Tibial artery (tissue), 4 donors: ENCODE measurements at regions of chr3 and their contacts with region 1.

Region 1: DNA sequence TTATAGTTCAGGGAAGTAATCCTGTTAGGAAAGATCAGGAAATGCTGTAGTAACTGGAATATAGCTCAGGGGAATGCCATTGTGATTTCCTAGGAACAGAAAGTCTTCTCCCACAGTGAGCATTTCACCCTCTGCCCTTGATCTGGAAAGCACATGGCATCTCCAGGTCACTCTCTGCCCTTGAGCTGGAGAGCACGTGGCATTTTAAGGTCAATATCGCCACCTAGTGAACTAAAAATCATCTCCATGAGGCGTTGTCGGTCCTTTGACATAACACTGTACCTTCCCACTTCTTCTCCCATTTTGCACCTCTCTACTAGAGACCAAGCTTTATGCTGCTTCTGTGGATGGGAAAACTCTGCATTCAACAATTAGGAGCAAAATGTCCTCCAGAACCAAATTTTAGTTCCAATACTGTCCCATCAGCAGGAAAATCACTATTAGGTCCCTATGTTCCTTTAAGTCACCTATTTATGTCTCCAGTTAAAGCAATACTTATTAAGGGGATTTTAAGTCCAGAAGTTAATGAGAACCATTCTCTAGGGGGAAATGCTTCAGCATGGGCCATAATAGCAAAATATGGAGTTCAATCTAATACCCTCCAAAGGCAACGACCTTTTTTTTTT is 54.7 kb upstream of the GK5 start:
- DNase-seq: peak in 1 of 2 donors; percentile 51
- H3K4me3 ChIP-seq: no peak overlapping the region
- H3K27ac ChIP-seq: no peak overlapping the region
- H3K4me1 ChIP-seq: peaks cover 0 to 16% (median 3%) of the 10 kb centered on the region in 4 donors
- H3K27me3 ChIP-seq: no peaks in the 10 kb centered on the region
- CTCF ChIP-seq: peak; percentile 59 to 76

Region 2: DNA sequence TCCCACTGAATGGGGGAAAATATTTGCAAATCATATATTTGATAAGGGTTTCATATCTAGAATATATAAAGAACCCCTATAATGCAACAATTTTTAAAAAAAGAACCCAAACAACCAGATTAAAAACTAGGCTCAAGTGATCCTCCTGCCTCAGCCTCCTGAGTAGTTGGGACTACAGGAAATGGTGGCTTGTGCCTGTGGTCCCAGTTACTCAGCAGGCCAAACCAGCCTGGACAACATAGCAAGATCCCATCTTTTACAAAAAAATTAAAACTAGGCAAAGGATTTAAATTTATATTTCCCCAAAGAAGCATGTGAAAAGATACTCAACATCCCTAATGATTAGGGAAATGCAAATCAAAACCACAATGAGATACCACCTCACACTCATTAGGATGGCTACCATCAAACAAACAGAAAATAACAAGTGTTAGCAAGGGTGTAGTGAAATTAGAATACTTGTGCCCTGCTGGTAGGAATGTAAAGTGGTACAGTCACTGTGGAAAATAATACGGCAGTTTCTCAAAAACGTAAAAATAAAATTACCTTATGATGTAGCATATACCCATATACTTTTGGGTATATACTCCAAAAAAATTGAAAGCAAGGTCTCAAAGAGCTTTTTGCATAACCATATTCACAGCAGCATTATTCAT is 150.4 kb before region 1 on chr3:
- intact Hi-C with region 1: loop called (anchors 10 kb)
- DNase-seq: no peak
- H3K4me3 ChIP-seq: no peak overlapping the region
- H3K27ac ChIP-seq: no peak overlapping the region
- H3K4me1 ChIP-seq: no peaks in the 10 kb centered on the region
- H3K27me3 ChIP-seq: no peaks in the 10 kb centered on the region
- CTCF ChIP-seq: no peak

Region 3: DNA sequence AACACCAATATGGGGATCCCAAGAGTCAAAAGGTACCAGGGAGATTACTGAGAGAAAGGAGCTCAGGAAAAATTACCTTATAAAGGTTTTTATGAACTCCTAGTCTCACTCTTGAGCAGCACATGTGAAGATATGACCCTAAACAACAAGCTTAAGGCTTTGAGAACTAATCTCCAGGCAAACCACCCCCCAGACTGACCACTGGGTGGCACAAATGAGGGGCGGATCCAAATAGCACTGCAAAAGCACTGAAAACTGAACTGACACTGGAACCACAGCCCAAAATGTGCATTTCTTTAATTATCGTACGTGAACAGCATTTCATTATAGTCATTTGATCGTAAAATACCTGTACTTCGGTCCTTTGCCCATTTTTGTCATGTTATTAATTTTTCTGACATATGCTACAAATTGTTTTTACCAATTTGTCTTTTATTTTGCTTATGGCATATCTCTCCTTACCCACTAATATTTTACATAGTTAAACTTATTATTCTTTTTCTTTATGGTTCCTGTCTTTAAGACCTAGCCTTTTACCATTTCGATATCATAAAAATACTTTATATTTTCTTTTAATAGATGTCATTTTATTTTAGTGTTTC is 99.2 kb before region 1 on chr3:
- intact Hi-C with region 1: loop called (anchors 10 kb)
- DNase-seq: peak in 1 of 2 donors; percentile 42
- H3K4me3 ChIP-seq: no peak overlapping the region
- H3K27ac ChIP-seq: no peak overlapping the region
- H3K4me1 ChIP-seq: no peaks in the 10 kb centered on the region
- H3K27me3 ChIP-seq: no peaks in the 10 kb centered on the region
- CTCF ChIP-seq: peak; percentile 62 to 66